ENCODE measurements at regions of chr11 and their contacts with region 1.

Region 1: DNA sequence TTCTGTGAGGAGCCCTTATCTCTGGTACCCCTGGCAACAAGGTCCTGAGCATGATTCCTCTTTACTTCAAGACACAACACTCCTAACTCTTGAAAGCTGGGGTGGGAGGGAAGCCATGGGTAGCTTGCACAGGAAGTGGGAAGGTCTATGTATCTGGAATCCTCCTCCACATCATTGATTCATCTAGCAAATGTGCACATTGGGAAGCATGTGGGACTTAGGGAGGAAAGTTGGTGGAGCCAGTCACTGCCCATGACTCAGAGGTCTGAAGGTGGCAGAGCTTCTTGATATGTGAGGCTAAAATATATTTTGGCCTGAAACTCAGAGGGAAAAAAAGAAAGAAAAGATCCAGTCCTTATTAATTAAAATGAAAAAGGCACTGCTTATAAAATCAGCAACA is 1000.9 kb downstream of the DLG2 start:
- DNase-seq: no peak
- ATAC-seq: no peak
- H3K4me3 ChIP-seq: no peak overlapping the region
- H3K27ac ChIP-seq: no peak overlapping the region
- H3K4me1 ChIP-seq: no peaks in the 10 kb centered on the region
- H3K27me3 ChIP-seq: no peaks in the 10 kb centered on the region
- CTCF ChIP-seq: no peak
- POLR2A ChIP-seq: no peak
- RAD21 ChIP-seq: no peak

Region 2: GRCh38 chr11:84663731-84664130 is 37.5 kb after region 1 on chr11:
- CTCF ChIA-PET with region 1: no interaction called
- POLR2A ChIA-PET with region 1: no interaction called
- dilution Hi-C with region 1: no loop called
- in situ Hi-C with region 1: no loop called
- intact Hi-C with region 1: loop called (anchors 1 kb)
- DNase-seq: no peak
- ATAC-seq: no peak
- H3K4me3 ChIP-seq: no peak overlapping the region
- H3K27ac ChIP-seq: no peak overlapping the region
- H3K4me1 ChIP-seq: no peaks in the 10 kb centered on the region
- H3K27me3 ChIP-seq: no peaks in the 10 kb centered on the region
- CTCF ChIP-seq: no peak
- POLR2A ChIP-seq: no peak
- RAD21 ChIP-seq: no peak

Region 3: GRCh38 chr11:84767964-84768363 is 141.7 kb after region 1 on chr11:
- CTCF ChIA-PET with region 1: no interaction called
- POLR2A ChIA-PET with region 1: no interaction called
- dilution Hi-C with region 1: no loop called
- in situ Hi-C with region 1: no loop called
- intact Hi-C with region 1: no loop called
- DNase-seq: no peak
- ATAC-seq: no peak
- H3K4me3 ChIP-seq: no peak overlapping the region
- H3K27ac ChIP-seq: no peak overlapping the region
- H3K4me1 ChIP-seq: no peaks in the 10 kb centered on the region
- H3K27me3 ChIP-seq: no peaks in the 10 kb centered on the region
- CTCF ChIP-seq: no peak
- POLR2A ChIP-seq: no peak
- RAD21 ChIP-seq: no peak